PC-9 (cell line): ENCODE measurements at regions of chr19 and their contacts with region 1.

Region 1: GRCh38 chr19:35140962-35141637 is 2.0 kb upstream of the FXYD7 start:
- DNase-seq: peak; percentile 77 to 95
- H3K4me3 ChIP-seq: no peak overlapping the region; the same call in 1 of the 2 replicates
- H3K27ac ChIP-seq: no peak overlapping the region
- H3K4me1 ChIP-seq: peaks cover 20% of the 10 kb centered on the region
- H3K27me3 ChIP-seq: no peaks in the 10 kb centered on the region
- CTCF ChIP-seq: peak; percentile 54; the same call in 1 of the 2 replicates

Region 2: DNA sequence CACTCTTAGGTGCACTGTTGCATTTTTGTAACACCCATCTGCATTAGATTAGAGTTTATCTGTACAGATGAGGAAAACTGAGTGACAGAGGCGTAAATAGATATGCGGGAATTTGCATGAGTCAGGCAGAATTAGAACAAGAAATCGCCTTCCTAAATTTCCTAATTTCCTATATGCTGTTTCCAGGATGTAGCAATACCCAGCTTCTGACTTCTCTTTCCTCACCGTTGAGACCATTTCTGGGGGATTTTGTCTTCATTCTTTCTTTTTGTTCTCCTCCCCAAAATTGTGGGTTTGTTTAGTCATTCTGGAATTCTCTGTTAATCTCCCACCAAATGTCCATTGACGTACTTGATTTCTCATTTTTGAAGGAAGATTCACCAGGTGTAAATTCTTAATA is 166.5 kb before region 1 on chr19:
- CTCF ChIA-PET with region 1: no interaction called
- POLR2A ChIA-PET with region 1: no interaction called
- intact Hi-C with region 1: loop called (anchors 5 kb)
- DNase-seq: no peak
- H3K4me3 ChIP-seq: no peak overlapping the region
- H3K27ac ChIP-seq: no peak overlapping the region
- H3K4me1 ChIP-seq: no peaks in the 10 kb centered on the region
- H3K27me3 ChIP-seq: peaks cover 44% of the 10 kb centered on the region
- CTCF ChIP-seq: no peak

Region 3: GRCh38 chr19:35055715-35056179 is 85.4 kb before region 1 on chr19:
- CTCF ChIA-PET with region 1: interaction called, 10 read pairs
- POLR2A ChIA-PET with region 1: no interaction called
- intact Hi-C with region 1: no loop called
- DNase-seq: peak in 1 of 2 experiments; percentile 51
- H3K4me3 ChIP-seq: no peak overlapping the region
- H3K27ac ChIP-seq: no peak overlapping the region
- H3K4me1 ChIP-seq: peaks cover 10% of the 10 kb centered on the region
- H3K27me3 ChIP-seq: no peaks in the 10 kb centered on the region
- CTCF ChIP-seq: peak; percentile 68

Region 4: GRCh38 chr19:35098413-35099049 is 42.6 kb before region 1 on chr19:
- CTCF ChIA-PET with region 1: no interaction called
- POLR2A ChIA-PET with region 1: no interaction called
- intact Hi-C with region 1: no loop called
- DNase-seq: no peak
- H3K4me3 ChIP-seq: no peak overlapping the region
- H3K27ac ChIP-seq: no peak overlapping the region
- H3K4me1 ChIP-seq: no peaks in the 10 kb centered on the region
- H3K27me3 ChIP-seq: no peaks in the 10 kb centered on the region
- CTCF ChIP-seq: no peak

Region 5: DNA sequence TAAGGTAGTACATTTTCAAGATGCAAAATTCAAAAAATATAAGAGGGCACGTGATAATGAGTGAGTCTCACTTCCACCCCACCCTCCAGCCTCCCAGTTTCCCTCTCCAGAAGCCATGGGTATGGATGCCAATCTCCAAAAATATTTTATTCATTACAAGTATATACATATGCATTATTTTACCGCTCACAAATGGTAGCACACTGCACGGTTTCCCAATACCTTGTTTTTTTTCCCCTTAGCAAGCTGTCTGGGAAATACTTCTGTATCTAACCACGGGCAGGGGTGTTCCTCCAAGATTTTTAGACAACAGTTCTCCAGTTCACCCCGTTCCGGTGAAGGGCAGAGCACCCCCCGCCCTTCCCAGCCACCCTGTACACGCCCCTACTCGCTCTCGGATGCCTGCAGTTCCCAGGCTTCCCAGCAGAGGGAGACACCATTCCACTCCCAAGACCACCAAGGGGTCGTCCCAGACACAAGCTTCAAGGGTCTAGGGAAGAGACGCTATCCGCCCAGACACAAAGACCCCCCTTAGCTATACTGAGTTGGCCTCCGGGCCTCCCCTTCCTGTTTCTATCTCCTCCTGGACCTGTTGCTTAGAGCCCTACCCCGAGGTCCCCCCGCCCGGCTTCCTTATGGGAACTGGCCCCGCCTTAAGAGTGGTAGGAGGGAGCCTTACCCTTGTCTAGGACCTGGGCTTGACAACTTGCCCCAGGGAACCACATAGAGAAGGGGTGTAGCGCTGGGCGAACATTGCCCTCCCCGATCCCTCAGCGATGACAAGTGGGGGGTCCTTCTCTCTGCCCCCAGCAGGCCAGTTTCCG is 26.5 kb before region 1 on chr19:
- CTCF ChIA-PET with region 1: interaction called, 4 read pairs
- POLR2A ChIA-PET with region 1: interaction called, 19 read pairs
- intact Hi-C with region 1: no loop called
- DNase-seq: peak; percentile 59 to 81
- H3K4me3 ChIP-seq: peak overlapping the region; percentile 89
- H3K27ac ChIP-seq: peak overlapping the region; percentile 71
- H3K4me1 ChIP-seq: peaks cover 51% of the 10 kb centered on the region
- H3K27me3 ChIP-seq: no peaks in the 10 kb centered on the region
- CTCF ChIP-seq: peak; percentile 100

Region 6: GRCh38 chr19:35247526-35248306 is 106.6 kb after region 1 on chr19:
- CTCF ChIA-PET with region 1: interaction called, 3 read pairs
- POLR2A ChIA-PET with region 1: no interaction called
- intact Hi-C with region 1: loop called (anchors 2 kb)
- DNase-seq: peak; percentile 91 to 96
- H3K4me3 ChIP-seq: peak overlapping the region; percentile 89
- H3K27ac ChIP-seq: peak overlapping the region; percentile 95
- H3K4me1 ChIP-seq: peaks cover 27% of the 10 kb centered on the region
- H3K27me3 ChIP-seq: no peaks in the 10 kb centered on the region
- CTCF ChIP-seq: peak; percentile 59

Region 7: DNA sequence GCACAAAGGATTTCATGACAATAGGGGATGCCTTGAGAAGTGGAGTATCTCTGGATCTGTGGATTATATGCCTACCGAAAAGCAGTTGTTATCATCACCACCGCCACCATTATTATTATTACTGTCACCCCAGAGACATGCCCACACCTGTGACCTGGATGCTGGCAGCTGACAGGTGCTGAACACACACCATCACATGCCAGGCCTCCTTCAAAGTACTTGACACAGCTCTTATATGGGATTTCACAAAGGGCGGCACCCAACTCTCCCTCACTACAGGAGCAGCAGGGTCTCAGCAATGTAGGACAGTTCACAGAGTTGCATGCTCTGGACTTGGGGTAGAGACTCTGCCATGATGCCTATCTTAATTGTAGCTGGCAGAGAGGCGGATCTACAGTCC is 224.2 kb after region 1 on chr19:
- CTCF ChIA-PET with region 1: no interaction called
- POLR2A ChIA-PET with region 1: no interaction called
- intact Hi-C with region 1: no loop called
- DNase-seq: no peak
- H3K4me3 ChIP-seq: no peak overlapping the region
- H3K27ac ChIP-seq: no peak overlapping the region
- H3K4me1 ChIP-seq: no peaks in the 10 kb centered on the region
- H3K27me3 ChIP-seq: peaks cover 22% of the 10 kb centered on the region
- CTCF ChIP-seq: no peak

Region 8: DNA sequence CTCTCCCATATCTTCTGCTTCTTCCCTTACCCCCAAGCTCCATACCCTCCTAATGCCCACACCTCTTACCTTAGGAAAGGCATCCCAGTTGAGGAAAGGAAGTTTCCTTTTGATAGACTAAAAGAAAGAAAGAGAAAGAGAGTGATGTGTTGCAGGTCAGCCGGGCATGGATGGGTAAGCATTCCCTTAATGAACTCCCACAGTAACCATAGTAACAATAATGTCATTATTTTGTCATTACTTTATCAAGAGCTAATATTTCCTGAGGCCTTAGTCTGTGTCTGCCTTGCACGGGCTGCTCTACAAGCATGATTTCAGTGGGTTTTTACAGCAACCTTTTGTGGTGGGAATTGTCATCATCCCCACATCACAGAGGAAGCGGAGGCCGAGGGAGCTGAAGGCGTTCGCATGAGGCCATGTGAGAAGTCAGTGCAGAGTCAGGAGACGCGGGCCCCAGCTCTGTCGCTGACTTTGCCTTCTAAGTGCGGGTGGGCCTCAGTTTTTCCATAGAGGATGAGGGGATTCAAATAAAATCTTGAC is 346.6 kb after region 1 on chr19:
- CTCF ChIA-PET with region 1: interaction called, 15 read pairs
- POLR2A ChIA-PET with region 1: no interaction called
- intact Hi-C with region 1: no loop called
- DNase-seq: no peak
- H3K4me3 ChIP-seq: no peak overlapping the region
- H3K27ac ChIP-seq: no peak overlapping the region
- H3K4me1 ChIP-seq: peaks cover 10% of the 10 kb centered on the region
- H3K27me3 ChIP-seq: peaks cover 55% of the 10 kb centered on the region
- CTCF ChIP-seq: no peak